Naive thymus-derived CD8-positive, alpha-beta T cell (primary cell): ENCODE measurements at regions of chr2 and their contacts with region 1.

Region 1: GRCh38 chr2:191150600-191151330 is at the start of gene STAT4:
- DNase-seq: peak; percentile 60 to 93 (median 88)
- ATAC-seq: peak; percentile 83 to 86
- H3K4me3 Mint-ChIP-seq: peak within 1 kb of the TSS; percentile 62 to 98 (median 96)
- H3K27ac Mint-ChIP-seq: peak within 1 kb of the TSS; percentile 90 to 99 (median 98)
- H3K4me1 Mint-ChIP-seq: peaks cover 15 to 64% (median 54%) of the 10 kb centered on the region in 4 donors
- H3K27me3 Mint-ChIP-seq: no peaks in the 10 kb centered on the region
- polyA plus RNA-seq, gene STAT4: 63.2 to 75.8 (median 73.7) TPM

Region 2: GRCh38 chr2:191020221-191020741 is 130.5 kb before region 1 on chr2:
- POLR2A ChIA-PET with region 1: interaction called, 11 read pairs
- DNase-seq: peak; percentile 84 to 95 (median 94)
- ATAC-seq: peak; percentile 75 to 83
- H3K4me3 Mint-ChIP-seq: no peak overlapping the region
- H3K27ac Mint-ChIP-seq: no peak overlapping the region
- H3K4me1 Mint-ChIP-seq: peaks cover 12 to 38% (median 22%) of the 10 kb centered on the region in 4 donors
- H3K27me3 Mint-ChIP-seq: peaks cover 0 to 2% (median 0%) of the 10 kb centered on the region in 5 donors

Region 3: GRCh38 chr2:191051825-191052778 is 98.7 kb before region 1 on chr2:
- POLR2A ChIA-PET with region 1: interaction called, 93 read pairs
- DNase-seq: peak in 6 of 10 donors; percentile 10 to 72 (median 42)
- ATAC-seq: peak; percentile 71 to 75
- H3K4me3 Mint-ChIP-seq: no peak overlapping the region
- H3K27ac Mint-ChIP-seq: no peak overlapping the region
- H3K4me1 Mint-ChIP-seq: peaks cover 10 to 31% (median 21%) of the 10 kb centered on the region in 4 donors
- H3K27me3 Mint-ChIP-seq: no peaks in the 10 kb centered on the region

Region 4: DNA sequence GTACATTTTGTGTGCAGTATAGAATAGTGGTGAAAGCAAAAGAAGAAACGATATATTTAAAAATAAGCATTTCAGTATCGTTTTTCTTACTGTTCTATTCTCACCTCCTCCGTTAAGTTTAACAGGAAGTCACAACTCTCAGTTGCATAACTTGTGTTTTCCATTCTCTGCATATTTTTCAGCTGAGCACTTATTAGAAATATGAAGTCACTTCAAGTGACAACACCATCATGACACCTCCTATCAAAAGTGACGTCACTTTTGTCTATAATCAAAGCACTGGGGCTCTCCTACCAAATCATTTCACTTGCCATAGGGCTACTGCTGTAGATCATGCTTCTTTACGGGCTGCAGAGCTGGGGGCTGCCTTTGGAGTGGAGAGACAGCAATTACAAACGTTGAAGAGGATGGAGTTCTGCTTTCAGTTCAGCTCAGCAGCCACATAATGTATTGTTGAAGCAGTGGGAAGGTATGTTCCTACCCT is 36.3 kb before region 1 on chr2:
- POLR2A ChIA-PET with region 1: interaction called, 12 read pairs
- DNase-seq: peak in 5 of 10 donors; percentile 34 to 53 (median 47)
- ATAC-seq: peak; percentile 61 to 75
- H3K4me3 Mint-ChIP-seq: peak overlapping the region; percentile 12 to 76 (median 72)
- H3K27ac Mint-ChIP-seq: peak overlapping the region; percentile 78 to 95 (median 90)
- H3K4me1 Mint-ChIP-seq: peaks cover 33 to 80% (median 76%) of the 10 kb centered on the region in 4 donors
- H3K27me3 Mint-ChIP-seq: no peaks in the 10 kb centered on the region

Region 5: DNA sequence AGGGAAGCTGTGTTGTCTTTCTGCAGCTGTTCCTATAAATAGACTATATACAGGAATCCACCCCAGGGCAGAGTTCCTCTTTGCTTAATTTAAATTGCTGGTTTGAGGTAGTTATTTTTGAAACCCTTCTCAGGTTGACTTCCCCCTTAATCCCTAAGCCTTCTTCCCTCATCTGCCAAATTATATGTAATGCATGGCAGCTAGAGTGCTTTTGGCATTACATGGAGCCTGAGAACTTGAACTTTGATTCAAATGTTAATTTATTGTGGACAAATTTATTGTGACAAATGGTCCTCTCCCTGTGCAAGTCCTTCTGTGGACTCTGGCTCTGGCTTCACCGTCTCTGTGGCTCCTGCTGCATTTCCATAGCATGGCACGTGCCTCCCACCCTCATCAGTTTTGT is 123.6 kb after region 1 on chr2:
- POLR2A ChIA-PET with region 1: no interaction called
- DNase-seq: no peak
- ATAC-seq: no peak
- H3K4me3 Mint-ChIP-seq: peak overlapping the region in 1 of 10 donors; percentile 20
- H3K27ac Mint-ChIP-seq: peak overlapping the region in 1 of 10 donors; percentile 8
- H3K4me1 Mint-ChIP-seq: peaks cover 0 to 38% (median 0%) of the 10 kb centered on the region in 4 donors
- H3K27me3 Mint-ChIP-seq: peaks cover 0 to 9% (median 3%) of the 10 kb centered on the region in 5 donors

Region 6: DNA sequence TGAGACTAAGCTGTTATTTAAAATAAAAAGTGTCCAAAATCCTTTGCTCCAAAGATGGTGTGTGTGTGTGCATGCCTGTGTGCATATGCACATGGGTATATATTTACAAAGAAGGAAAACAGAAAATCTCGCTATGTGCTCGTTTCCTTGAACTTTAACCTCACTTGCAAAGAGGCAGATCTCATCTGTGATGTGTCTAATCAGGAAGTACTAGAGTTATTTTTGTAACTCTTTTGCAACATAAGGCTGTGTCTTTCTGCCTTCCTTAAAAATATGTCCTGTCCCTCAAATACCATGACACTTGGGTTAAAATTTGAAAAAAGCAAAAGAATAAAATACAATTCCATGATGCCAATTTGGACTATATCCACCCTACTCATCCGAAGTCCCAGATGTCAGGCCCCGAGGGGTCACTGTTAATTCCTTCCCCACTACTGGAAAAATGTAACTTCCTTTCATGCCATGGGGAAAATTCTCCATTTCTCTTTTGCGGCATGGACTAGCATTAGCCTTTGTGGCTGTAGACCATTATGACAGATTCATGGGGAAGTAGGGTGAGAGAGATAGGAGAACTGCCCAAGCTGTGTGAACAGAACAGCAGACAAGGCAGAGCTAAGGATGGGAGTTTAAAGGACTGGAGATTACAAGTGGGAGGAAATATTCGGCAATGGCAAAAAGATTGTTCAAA is 285.7 kb after region 1 on chr2:
- POLR2A ChIA-PET with region 1: no interaction called
- DNase-seq: no peak
- ATAC-seq: no peak
- H3K4me3 Mint-ChIP-seq: no peak overlapping the region
- H3K27ac Mint-ChIP-seq: no peak overlapping the region
- H3K4me1 Mint-ChIP-seq: peaks cover 0 to 6% (median 0%) of the 10 kb centered on the region in 4 donors
- H3K27me3 Mint-ChIP-seq: peaks cover 0 to 3% (median 0%) of the 10 kb centered on the region in 5 donors